Naive thymus-derived CD4-positive, alpha-beta T cell (primary cell): ENCODE measurements at regions of chr3 and their contacts with region 1.

Region 1: GRCh38 chr3:155854141-155854940 is at the start of gene SLC33A1:
- DNase-seq: peak; percentile 95 to 99 (median 98)
- ATAC-seq: peak; percentile 96
- H3K4me3 ChIP-seq: peak within 1 kb of the TSS; percentile 85
- H3K4me3 Mint-ChIP-seq: peak within 1 kb of the TSS; percentile 86 to 99 (median 95)
- H3K27ac ChIP-seq: peak within 1 kb of the TSS; percentile 90
- H3K27ac Mint-ChIP-seq: peak within 1 kb of the TSS; percentile 97 to 100 (median 99)
- H3K4me1 ChIP-seq: peaks cover 19 to 33% of the 10 kb centered on the region in 2 donors
- H3K4me1 Mint-ChIP-seq: peaks cover 24 to 47% (median 39%) of the 10 kb centered on the region in 7 donors
- H3K27me3 ChIP-seq: no peaks in the 10 kb centered on the region
- H3K27me3 Mint-ChIP-seq: peaks cover 0 to 7% (median 0%) of the 10 kb centered on the region in 5 donors
- total RNA-seq, gene SLC33A1: 19.8 to 40.8 (median 31.9) TPM

Region 2: DNA sequence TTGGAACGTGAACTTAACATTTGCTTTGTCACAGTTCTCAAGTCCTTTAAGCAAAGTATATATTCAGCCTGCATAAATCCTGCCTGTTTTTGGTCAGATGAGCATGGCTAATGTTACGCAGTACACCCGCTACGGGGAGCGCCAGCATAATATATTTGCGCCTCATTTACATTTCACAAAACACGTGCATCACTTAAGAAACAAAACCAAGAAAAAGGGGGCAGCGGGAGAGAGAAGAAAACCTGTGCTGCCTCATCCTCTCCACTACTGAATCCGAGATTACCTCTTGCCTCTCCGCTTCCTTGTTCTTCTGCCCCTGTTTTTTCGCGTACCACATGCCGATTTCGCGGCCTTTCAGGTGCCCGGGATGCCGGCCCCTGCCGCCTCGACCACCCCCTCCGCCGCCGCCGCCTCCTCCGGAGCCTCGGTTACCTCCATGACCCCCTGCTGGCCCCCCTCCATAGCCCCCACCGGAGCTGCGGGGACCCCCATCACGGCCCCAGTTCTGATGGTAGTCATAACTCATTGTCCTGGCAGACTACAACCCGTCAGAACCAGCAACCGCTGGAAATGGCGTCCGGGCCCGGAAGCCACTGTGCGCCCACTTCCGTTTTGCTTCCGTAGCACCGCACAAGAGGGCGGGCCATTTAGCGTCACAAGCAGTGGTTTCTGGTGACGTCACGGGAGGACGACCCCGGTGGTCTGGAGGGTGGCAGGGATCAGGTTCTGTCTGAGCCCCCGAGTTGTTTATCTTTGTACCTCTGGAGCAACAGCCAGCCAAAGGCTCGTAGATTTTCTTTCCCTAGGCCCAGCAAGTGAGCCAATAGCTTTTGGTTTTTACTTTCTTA is 1530.2 kb before region 1 on chr3 and contains the start of gene DHX36:
- CTCF ChIA-PET with region 1: no interaction called
- POLR2A ChIA-PET with region 1: no interaction called
- intact Hi-C with region 1: loop called (anchors 1 kb)
- DNase-seq: peak; percentile 73 to 92 (median 89)
- ATAC-seq: peak; percentile 94
- H3K4me3 ChIP-seq: peak within 1 kb of the TSS; percentile 70
- H3K4me3 Mint-ChIP-seq: peak within 1 kb of the TSS in 5 of 10 donors; percentile 92 to 96 (median 96)
- H3K27ac ChIP-seq: peak within 1 kb of the TSS; percentile 94
- H3K27ac Mint-ChIP-seq: peak within 1 kb of the TSS in 8 of 9 donors; percentile 96 to 100 (median 99)
- H3K4me1 ChIP-seq: peaks cover 38 to 43% of the 10 kb centered on the region in 2 donors
- H3K4me1 Mint-ChIP-seq: peaks cover 4 to 23% (median 20%) of the 10 kb centered on the region in 7 donors
- H3K27me3 ChIP-seq: no peaks in the 10 kb centered on the region
- H3K27me3 Mint-ChIP-seq: peaks cover 0 to under 1% (median 0%) of the 10 kb centered on the region in 5 donors
- total RNA-seq, gene DHX36: 73.4 to 101 (median 91.3) TPM

Region 3: DNA sequence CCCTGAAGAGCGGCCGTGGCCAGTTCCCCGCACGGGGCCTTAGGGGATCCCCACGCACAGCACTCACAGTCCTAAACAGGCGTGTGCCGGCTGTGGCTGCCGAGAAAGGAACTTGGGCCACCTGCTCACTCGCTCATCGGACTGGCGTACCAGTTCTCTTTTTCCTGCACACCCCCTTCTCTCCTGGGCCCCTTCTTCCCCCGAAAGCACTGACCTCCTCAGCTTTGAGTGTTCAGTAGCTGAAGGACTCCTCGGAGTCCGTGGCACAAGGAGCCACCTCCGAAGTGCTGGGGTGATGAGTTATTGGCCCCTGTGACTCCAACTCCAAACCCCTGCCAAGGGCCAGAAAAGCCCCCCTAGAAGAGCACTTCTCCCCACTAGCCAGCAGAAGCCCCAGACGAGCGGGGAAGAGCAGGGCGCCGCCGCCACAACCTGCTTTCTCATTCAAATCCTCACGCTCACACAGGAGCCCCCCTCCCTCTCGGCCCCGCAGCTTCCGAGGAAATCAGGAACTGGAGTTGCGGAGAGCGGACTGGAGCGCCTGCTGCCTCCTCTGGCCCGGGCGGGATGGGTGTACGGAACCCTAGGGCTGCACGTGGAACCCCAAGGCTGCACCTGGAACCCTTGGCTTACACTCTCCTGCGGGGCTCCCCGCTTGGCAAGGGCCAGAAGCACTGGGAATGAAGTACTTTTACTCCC is 109.6 kb before region 1 on chr3 and contains the start of gene PLCH1:
- CTCF ChIA-PET with region 1: no interaction called
- POLR2A ChIA-PET with region 1: no interaction called
- intact Hi-C with region 1: loop called in 1 of 2 experiments (anchors 1 kb)
- DNase-seq: peak; percentile 4 to 47 (median 30)
- ATAC-seq: peak; percentile 78
- H3K4me3 ChIP-seq: peak within 1 kb of the TSS; percentile 80
- H3K4me3 Mint-ChIP-seq: peak within 1 kb of the TSS; percentile 84 to 93 (median 92)
- H3K27ac ChIP-seq: peak within 1 kb of the TSS; percentile 37
- H3K27ac Mint-ChIP-seq: peak within 1 kb of the TSS in 8 of 9 donors; percentile 14 to 70 (median 50)
- H3K4me1 ChIP-seq: peaks cover 5 to 13% of the 10 kb centered on the region in 2 donors
- H3K4me1 Mint-ChIP-seq: peaks cover 12 to 27% (median 17%) of the 10 kb centered on the region in 7 donors
- H3K27me3 ChIP-seq: peaks cover 5 to 11% of the 10 kb centered on the region in 2 donors
- H3K27me3 Mint-ChIP-seq: peaks cover 35 to 80% (median 46%) of the 10 kb centered on the region in 5 donors
- total RNA-seq, gene PLCH1: 0.56 TPM in 1 of 5 experiments, not detected in the others

Region 4: DNA sequence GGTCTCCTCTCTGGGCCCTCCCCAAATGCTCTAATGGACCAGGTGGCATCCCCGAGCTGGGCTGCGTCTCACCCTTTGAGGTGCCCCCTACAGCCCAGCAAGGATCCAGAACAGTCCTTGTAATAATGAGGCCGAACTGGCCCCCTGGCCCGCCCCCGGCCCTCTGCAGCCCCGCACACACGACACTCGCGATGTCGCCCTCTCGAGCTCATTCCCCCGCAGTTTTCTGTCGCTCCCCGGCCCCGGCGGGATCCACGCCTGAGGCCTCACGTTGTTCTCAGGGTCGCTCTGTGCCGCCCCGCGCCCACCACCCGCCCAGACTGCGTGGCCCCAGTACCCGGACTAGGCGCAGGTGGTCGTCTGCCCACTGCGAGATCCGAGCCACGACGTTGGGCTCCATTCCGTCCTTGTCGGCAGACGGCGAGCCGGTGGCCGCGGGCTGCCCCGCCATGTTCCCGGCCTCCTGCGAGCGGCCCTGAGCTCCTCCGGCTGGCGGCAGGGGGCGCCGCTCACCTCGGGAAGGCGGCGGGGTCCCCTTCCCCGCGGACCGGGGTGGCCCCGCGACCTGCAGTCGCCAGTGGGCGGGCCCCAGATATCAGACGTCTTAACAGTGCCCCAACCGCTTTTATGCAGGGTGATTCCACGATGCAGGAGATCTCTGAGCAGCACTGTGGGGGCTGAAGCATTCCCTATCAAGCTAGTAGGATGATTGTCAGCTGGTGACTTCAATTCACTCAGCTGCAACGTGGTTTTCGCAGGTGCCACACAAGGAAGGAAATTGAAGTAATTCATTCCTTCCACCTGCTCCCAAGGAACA is 48.3 kb before region 1 on chr3 and contains the start of gene C3orf33:
- CTCF ChIA-PET with region 1: interaction called, 13 read pairs
- POLR2A ChIA-PET with region 1: interaction called, 25 read pairs
- intact Hi-C with region 1: loop called (anchors 1 kb)
- DNase-seq: peak; percentile 52 to 85 (median 78)
- ATAC-seq: peak; percentile 98
- H3K4me3 ChIP-seq: peak within 1 kb of the TSS; percentile 71
- H3K4me3 Mint-ChIP-seq: peak within 1 kb of the TSS; percentile 79 to 91 (median 90)
- H3K27ac ChIP-seq: peak within 1 kb of the TSS; percentile 79
- H3K27ac Mint-ChIP-seq: peak within 1 kb of the TSS; percentile 71 to 94 (median 82)
- H3K4me1 ChIP-seq: no peaks in the 10 kb centered on the region
- H3K4me1 Mint-ChIP-seq: peaks cover 8 to 28% (median 17%) of the 10 kb centered on the region in 7 donors
- H3K27me3 ChIP-seq: no peaks in the 10 kb centered on the region
- H3K27me3 Mint-ChIP-seq: peaks cover 6 to 15% (median 10%) of the 10 kb centered on the region in 5 donors
- total RNA-seq, gene C3orf33: 1.1 to 4.6 (median 2.7) TPM

Region 5: GRCh38 chr3:156483961-156484787 is 629.8 kb after region 1 on chr3:
- CTCF ChIA-PET with region 1: no interaction called
- POLR2A ChIA-PET with region 1: no interaction called
- intact Hi-C with region 1: loop called in 1 of 2 experiments (anchors 5 kb)
- DNase-seq: peak in 8 of 9 donors; percentile 35 to 68 (median 62)
- ATAC-seq: peak; percentile 88
- H3K4me3 ChIP-seq: peak overlapping the region; percentile 47
- H3K4me3 Mint-ChIP-seq: peak overlapping the region; percentile 52 to 85 (median 74)
- H3K27ac ChIP-seq: peak overlapping the region; percentile 63
- H3K27ac Mint-ChIP-seq: peak overlapping the region; percentile 76 to 95 (median 83)
- H3K4me1 ChIP-seq: peaks cover 21 to 25% of the 10 kb centered on the region in 2 donors
- H3K4me1 Mint-ChIP-seq: peaks cover 14 to 40% (median 35%) of the 10 kb centered on the region in 7 donors
- H3K27me3 ChIP-seq: no peaks in the 10 kb centered on the region
- H3K27me3 Mint-ChIP-seq: peaks cover 0 to 17% (median 0%) of the 10 kb centered on the region in 5 donors

Region 6: GRCh38 chr3:157088601-157089454 is 1234.5 kb after region 1 on chr3:
- CTCF ChIA-PET with region 1: no interaction called
- POLR2A ChIA-PET with region 1: no interaction called
- intact Hi-C with region 1: loop called (anchors 1 to 2 kb)
- DNase-seq: peak; percentile 90 to 97 (median 93)
- ATAC-seq: peak; percentile 95
- H3K4me3 ChIP-seq: peak overlapping the region; percentile 84
- H3K4me3 Mint-ChIP-seq: peak overlapping the region; percentile 81 to 89 (median 87)
- H3K27ac ChIP-seq: peak overlapping the region; percentile 83
- H3K27ac Mint-ChIP-seq: peak overlapping the region; percentile 92 to 98 (median 96)
- H3K4me1 ChIP-seq: peaks cover 11 to 30% of the 10 kb centered on the region in 2 donors
- H3K4me1 Mint-ChIP-seq: peaks cover 11 to 79% (median 23%) of the 10 kb centered on the region in 7 donors
- H3K27me3 ChIP-seq: no peaks in the 10 kb centered on the region
- H3K27me3 Mint-ChIP-seq: peaks cover 0 to 6% (median 0%) of the 10 kb centered on the region in 5 donors